ENCODE measurements at regions of chr13 and their contacts with region 1.

Region 1: DNA sequence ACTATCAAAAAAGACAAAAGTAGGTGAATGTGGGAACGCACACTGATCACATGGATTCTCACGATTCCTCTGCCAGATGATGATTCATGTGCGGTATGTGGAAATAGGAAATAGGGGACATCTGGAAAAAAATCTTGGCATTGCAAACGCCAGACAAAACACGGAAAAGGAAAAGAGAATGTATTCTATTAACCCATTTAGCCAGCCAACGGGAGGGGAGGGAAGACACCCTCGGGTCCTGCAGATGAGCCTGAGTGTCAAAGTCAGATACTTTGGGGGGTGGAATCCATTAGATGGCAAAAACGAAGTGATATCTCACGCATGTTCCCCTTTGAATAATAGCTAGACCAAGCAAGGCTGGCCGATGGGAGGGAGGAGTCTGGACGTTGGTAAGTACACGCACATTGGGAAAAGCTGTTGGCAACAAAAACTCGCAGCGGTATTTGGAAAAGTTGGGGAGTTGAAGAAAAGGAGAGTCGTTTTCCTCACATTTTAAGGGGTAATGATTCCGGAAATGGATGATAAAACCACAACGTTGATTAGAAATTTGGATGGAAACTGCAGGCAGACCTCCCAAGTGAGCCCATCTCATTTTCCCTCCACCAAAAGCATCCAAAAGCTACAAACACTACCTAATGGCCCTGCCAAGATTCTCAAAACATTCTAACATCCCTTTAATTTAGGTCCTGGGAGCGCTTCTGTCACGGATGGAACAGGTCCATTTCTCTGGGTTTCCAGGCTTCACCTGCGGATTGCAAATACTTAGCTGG is 73.6 kb downstream of the COL4A1 start:
- DNase-seq: peak; percentile 94
- H3K4me3 Mint-ChIP-seq: no peak overlapping the region
- H3K27ac Mint-ChIP-seq: no peak overlapping the region
- H3K4me1 Mint-ChIP-seq: peaks cover 14% of the 10 kb centered on the region
- H3K27me3 Mint-ChIP-seq: no peaks in the 10 kb centered on the region
- CTCF ChIP-seq: no peak

Region 2: GRCh38 chr13:110197046-110197445 is 36.3 kb before region 1 on chr13:
- CTCF ChIA-PET with region 1: no interaction called
- POLR2A ChIA-PET with region 1: no interaction called
- intact Hi-C with region 1: no loop called
- DNase-seq: peak; percentile 1
- H3K4me3 Mint-ChIP-seq: no peak overlapping the region
- H3K27ac Mint-ChIP-seq: no peak overlapping the region
- H3K4me1 Mint-ChIP-seq: no peaks in the 10 kb centered on the region
- H3K27me3 Mint-ChIP-seq: no peaks in the 10 kb centered on the region
- CTCF ChIP-seq: no peak

Region 3: GRCh38 chr13:110218581-110219201 is 14.7 kb before region 1 on chr13:
- CTCF ChIA-PET with region 1: interaction called, 14 read pairs
- POLR2A ChIA-PET with region 1: interaction called, 5 read pairs
- intact Hi-C with region 1: no loop called
- DNase-seq: no peak
- H3K4me3 Mint-ChIP-seq: no peak overlapping the region
- H3K27ac Mint-ChIP-seq: no peak overlapping the region
- H3K4me1 Mint-ChIP-seq: no peaks in the 10 kb centered on the region
- H3K27me3 Mint-ChIP-seq: no peaks in the 10 kb centered on the region
- CTCF ChIP-seq: no peak